ENCODE measurements at regions of chr12 and their contacts with region 1.

Region 1: GRCh38 chr12:96399919-96400797 is at the start of gene CDK17:
- DNase-seq: peak; percentile 82
- H3K4me3 Mint-ChIP-seq: peak within 1 kb of the TSS; percentile 98
- H3K27ac Mint-ChIP-seq: peak within 1 kb of the TSS; percentile 98
- H3K4me1 Mint-ChIP-seq: peaks cover 32% of the 10 kb centered on the region
- H3K27me3 Mint-ChIP-seq: no peaks in the 10 kb centered on the region
- CTCF ChIP-seq: peak; percentile 40
- total RNA-seq, gene CDK17: 49.8 and 50.9 TPM in 2 replicates

Region 2: GRCh38 chr12:96194971-96195844 is 204.9 kb before region 1 on chr12:
- CTCF ChIA-PET with region 1: no interaction called
- POLR2A ChIA-PET with region 1: interaction called, 62 read pairs
- intact Hi-C with region 1: no loop called
- DNase-seq: peak; percentile 85
- H3K4me3 Mint-ChIP-seq: peak overlapping the region; percentile 95
- H3K27ac Mint-ChIP-seq: peak overlapping the region; percentile 75
- H3K4me1 Mint-ChIP-seq: peaks cover 13% of the 10 kb centered on the region
- H3K27me3 Mint-ChIP-seq: no peaks in the 10 kb centered on the region
- CTCF ChIP-seq: no peak

Region 3: DNA sequence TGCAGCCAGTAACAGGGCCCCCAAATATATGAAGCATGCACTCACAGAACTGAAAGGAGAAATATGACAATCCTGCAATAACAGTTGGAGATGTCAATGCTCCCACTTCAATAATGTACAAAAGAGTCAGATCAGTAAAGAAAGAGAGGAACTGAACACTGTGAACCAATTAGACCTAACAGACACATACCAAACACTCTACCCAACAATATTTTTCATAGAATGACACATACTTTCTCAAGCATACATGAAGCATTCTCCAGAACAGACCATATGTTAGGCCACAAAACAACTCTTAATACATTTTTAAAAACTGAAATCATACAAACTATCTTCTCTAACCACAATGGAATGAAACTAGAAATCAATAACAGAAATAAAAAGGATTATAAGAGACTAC is 125.8 kb before region 1 on chr12:
- CTCF ChIA-PET with region 1: no interaction called
- POLR2A ChIA-PET with region 1: interaction called, 6 read pairs
- intact Hi-C with region 1: loop called (anchors 5 kb)
- DNase-seq: no peak
- H3K4me3 Mint-ChIP-seq: no peak overlapping the region
- H3K27ac Mint-ChIP-seq: peak overlapping the region; percentile 40
- H3K4me1 Mint-ChIP-seq: peaks cover 19% of the 10 kb centered on the region
- H3K27me3 Mint-ChIP-seq: no peaks in the 10 kb centered on the region
- CTCF ChIP-seq: no peak

Region 4: DNA sequence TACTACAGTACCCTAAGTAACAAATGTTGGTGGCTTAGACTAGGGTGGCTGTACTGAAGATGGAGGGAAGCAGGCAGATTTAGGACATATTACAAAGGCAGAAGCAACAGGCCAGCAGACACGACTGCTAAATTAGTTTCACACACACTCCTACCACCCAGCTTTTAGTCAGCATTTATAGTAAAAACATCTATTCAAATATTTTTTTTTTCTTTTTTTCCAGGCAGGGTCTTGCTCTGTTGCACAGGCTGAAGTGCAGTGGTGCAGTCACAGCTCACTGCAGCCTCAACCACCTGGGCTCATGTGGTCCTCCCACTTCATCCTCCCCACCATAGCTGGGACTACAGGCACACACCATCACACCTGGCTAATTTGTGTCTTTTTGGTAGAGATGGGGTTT is 72.8 kb before region 1 on chr12:
- CTCF ChIA-PET with region 1: interaction called, 4 read pairs
- POLR2A ChIA-PET with region 1: interaction called, 13 read pairs
- intact Hi-C with region 1: no loop called
- DNase-seq: no peak
- H3K4me3 Mint-ChIP-seq: no peak overlapping the region
- H3K27ac Mint-ChIP-seq: no peak overlapping the region
- H3K4me1 Mint-ChIP-seq: peaks cover 13% of the 10 kb centered on the region
- H3K27me3 Mint-ChIP-seq: no peaks in the 10 kb centered on the region
- CTCF ChIP-seq: no peak

Region 5: GRCh38 chr12:96387981-96388380 is 12.2 kb before region 1 on chr12:
- CTCF ChIA-PET with region 1: interaction called, 18 read pairs
- POLR2A ChIA-PET with region 1: interaction called, 6 read pairs
- intact Hi-C with region 1: no loop called
- DNase-seq: no peak
- H3K4me3 Mint-ChIP-seq: no peak overlapping the region
- H3K27ac Mint-ChIP-seq: no peak overlapping the region
- H3K4me1 Mint-ChIP-seq: peaks cover 23% of the 10 kb centered on the region
- H3K27me3 Mint-ChIP-seq: no peaks in the 10 kb centered on the region
- CTCF ChIP-seq: no peak

Region 6: GRCh38 chr12:96489103-96490056 is 89.2 kb after region 1 on chr12 and contains the start of gene CFAP54:
- CTCF ChIA-PET with region 1: interaction called, 12 read pairs
- POLR2A ChIA-PET with region 1: interaction called, 55 read pairs
- intact Hi-C with region 1: loop called (anchors 1 kb)
- DNase-seq: peak; percentile 94
- H3K4me3 Mint-ChIP-seq: peak within 1 kb of the TSS; percentile 85
- H3K27ac Mint-ChIP-seq: peak within 1 kb of the TSS; percentile 98
- H3K4me1 Mint-ChIP-seq: peaks cover 18% of the 10 kb centered on the region
- H3K27me3 Mint-ChIP-seq: no peaks in the 10 kb centered on the region
- CTCF ChIP-seq: peak; percentile 85
- total RNA-seq, gene CFAP54: 0.56 and 1.1 TPM in 2 replicates

Region 7: DNA sequence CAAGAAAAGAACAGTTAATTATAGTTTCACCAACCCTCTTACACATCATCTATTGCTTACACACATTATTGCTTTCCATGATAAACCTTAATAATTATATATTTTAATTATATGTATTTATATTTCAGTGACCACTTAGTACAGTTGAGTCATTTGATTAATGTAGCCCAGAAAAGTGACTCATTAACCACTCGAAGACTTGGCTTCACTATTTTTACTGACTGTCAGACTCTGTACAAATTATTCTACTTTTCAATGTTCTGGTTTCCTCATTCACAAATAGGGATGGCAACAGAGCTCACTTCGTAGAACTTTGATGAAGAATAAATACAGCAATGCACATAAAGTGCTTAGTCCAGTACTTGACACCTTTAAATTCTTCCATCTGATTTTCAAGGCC is 187.5 kb after region 1 on chr12:
- CTCF ChIA-PET with region 1: no interaction called
- POLR2A ChIA-PET with region 1: no interaction called
- intact Hi-C with region 1: no loop called
- DNase-seq: no peak
- H3K4me3 Mint-ChIP-seq: no peak overlapping the region
- H3K27ac Mint-ChIP-seq: no peak overlapping the region
- H3K4me1 Mint-ChIP-seq: peaks cover 25% of the 10 kb centered on the region
- H3K27me3 Mint-ChIP-seq: no peaks in the 10 kb centered on the region
- CTCF ChIP-seq: no peak

Region 8: GRCh38 chr12:96828169-96828789 is 428.1 kb after region 1 on chr12:
- CTCF ChIA-PET with region 1: no interaction called
- POLR2A ChIA-PET with region 1: no interaction called
- intact Hi-C with region 1: no loop called
- DNase-seq: no peak
- H3K4me3 Mint-ChIP-seq: no peak overlapping the region
- H3K27ac Mint-ChIP-seq: no peak overlapping the region
- H3K4me1 Mint-ChIP-seq: no peaks in the 10 kb centered on the region
- H3K27me3 Mint-ChIP-seq: no peaks in the 10 kb centered on the region
- CTCF ChIP-seq: no peak